ENCODE measurements at regions of chr16 and their contacts with region 1.

Region 1: GRCh38 chr16:67816240-67817031 is 9.7 kb downstream of the TSNAXIP1 start:
- DNase-seq: peak; percentile 93
- H3K4me3 Mint-ChIP-seq: no peak overlapping the region
- H3K27ac Mint-ChIP-seq: no peak overlapping the region
- H3K4me1 Mint-ChIP-seq: peaks cover 4% of the 10 kb centered on the region
- H3K27me3 Mint-ChIP-seq: no peaks in the 10 kb centered on the region

Region 2: GRCh38 chr16:66091471-66091891 is 1725.0 kb before region 1 on chr16:
- CTCF ChIA-PET with region 1: no interaction called
- intact Hi-C with region 1: no loop called
- DNase-seq: no peak
- H3K4me3 Mint-ChIP-seq: no peak overlapping the region
- H3K27ac Mint-ChIP-seq: no peak overlapping the region
- H3K4me1 Mint-ChIP-seq: no peaks in the 10 kb centered on the region
- H3K27me3 Mint-ChIP-seq: peaks cover 2% of the 10 kb centered on the region

Region 3: GRCh38 chr16:66508261-66508913 is 1308.0 kb before region 1 on chr16:
- CTCF ChIA-PET with region 1: no interaction called
- intact Hi-C with region 1: no loop called
- DNase-seq: no peak
- H3K4me3 Mint-ChIP-seq: no peak overlapping the region
- H3K27ac Mint-ChIP-seq: no peak overlapping the region
- H3K4me1 Mint-ChIP-seq: no peaks in the 10 kb centered on the region
- H3K27me3 Mint-ChIP-seq: no peaks in the 10 kb centered on the region

Region 4: DNA sequence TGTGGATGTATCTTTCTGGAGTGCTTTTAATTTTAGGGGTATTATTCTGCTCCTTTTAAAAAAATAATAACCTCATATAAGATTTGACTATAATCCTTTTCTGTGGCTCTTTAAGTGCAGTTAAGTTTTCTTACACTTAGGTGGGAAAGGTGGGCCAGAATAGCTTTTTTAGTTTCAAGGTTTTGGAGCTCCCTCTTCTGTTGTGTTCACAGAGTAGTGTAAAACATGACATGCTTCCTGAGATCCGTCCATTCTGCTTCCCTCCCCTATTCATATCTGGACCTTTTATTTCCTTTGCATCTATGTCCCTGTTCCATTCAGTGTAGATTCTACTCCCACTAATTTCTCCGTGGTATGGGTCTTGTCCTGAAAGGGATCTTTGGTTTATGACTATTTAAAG is 477.0 kb before region 1 on chr16:
- CTCF ChIA-PET with region 1: no interaction called
- intact Hi-C with region 1: no loop called
- DNase-seq: no peak
- H3K4me3 Mint-ChIP-seq: no peak overlapping the region
- H3K27ac Mint-ChIP-seq: no peak overlapping the region
- H3K4me1 Mint-ChIP-seq: no peaks in the 10 kb centered on the region
- H3K27me3 Mint-ChIP-seq: peaks cover 11% of the 10 kb centered on the region

Region 5: DNA sequence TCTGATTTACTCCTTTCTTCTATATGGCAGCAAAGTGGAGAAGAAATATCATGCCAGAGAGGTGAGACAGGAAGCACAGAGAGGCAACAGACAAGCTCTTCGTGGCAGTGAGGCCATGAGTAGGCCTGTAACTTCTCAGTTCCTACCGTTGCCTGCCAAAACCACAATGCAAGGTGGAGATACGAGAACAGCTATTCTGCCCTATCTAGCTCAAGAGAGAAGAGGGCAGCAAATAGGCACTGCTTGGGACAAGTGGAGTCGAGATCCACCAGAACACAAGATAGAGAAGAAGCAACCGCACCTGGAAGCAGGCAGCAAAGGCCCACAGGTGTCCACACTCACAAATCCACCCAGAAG is 34.9 kb before region 1 on chr16:
- CTCF ChIA-PET with region 1: interaction called, 23 read pairs
- intact Hi-C with region 1: no loop called
- DNase-seq: peak; percentile 54
- H3K4me3 Mint-ChIP-seq: no peak overlapping the region
- H3K27ac Mint-ChIP-seq: peak overlapping the region; percentile 67
- H3K4me1 Mint-ChIP-seq: peaks cover 32% of the 10 kb centered on the region
- H3K27me3 Mint-ChIP-seq: no peaks in the 10 kb centered on the region

Region 6: GRCh38 chr16:67833418-67834241 is 17.2 kb after region 1 on chr16:
- CTCF ChIA-PET with region 1: interaction called, 58 read pairs
- intact Hi-C with region 1: loop called (anchors 1 kb)
- DNase-seq: peak; percentile 98
- H3K4me3 Mint-ChIP-seq: peak overlapping the region; percentile 86
- H3K27ac Mint-ChIP-seq: no peak overlapping the region
- H3K4me1 Mint-ChIP-seq: peaks cover 6% of the 10 kb centered on the region
- H3K27me3 Mint-ChIP-seq: no peaks in the 10 kb centered on the region

Region 7: DNA sequence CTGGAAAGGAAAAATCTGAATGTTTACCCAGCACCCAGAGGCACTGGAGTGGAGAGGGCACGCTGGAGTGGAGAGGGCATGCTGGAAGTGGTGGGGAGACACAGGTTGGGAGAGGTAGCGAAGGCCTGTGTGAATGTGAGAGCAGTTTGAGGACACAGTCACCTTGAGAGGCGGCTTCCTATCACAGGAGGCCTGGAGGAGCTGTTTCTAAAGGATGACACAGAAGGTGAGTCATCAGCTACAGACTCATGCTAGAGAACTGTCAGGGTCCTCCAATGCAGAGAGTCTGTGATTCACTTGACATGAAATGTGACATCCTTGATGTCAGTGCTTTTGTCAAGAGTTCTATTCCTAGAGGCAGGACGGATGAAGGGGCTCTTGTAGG is 101.4 kb after region 1 on chr16:
- CTCF ChIA-PET with region 1: interaction called, 7 read pairs
- intact Hi-C with region 1: loop called (anchors 1 kb)
- DNase-seq: peak; percentile 81
- H3K4me3 Mint-ChIP-seq: no peak overlapping the region
- H3K27ac Mint-ChIP-seq: peak overlapping the region; percentile 89
- H3K4me1 Mint-ChIP-seq: peaks cover 38% of the 10 kb centered on the region
- H3K27me3 Mint-ChIP-seq: no peaks in the 10 kb centered on the region

Region 8: DNA sequence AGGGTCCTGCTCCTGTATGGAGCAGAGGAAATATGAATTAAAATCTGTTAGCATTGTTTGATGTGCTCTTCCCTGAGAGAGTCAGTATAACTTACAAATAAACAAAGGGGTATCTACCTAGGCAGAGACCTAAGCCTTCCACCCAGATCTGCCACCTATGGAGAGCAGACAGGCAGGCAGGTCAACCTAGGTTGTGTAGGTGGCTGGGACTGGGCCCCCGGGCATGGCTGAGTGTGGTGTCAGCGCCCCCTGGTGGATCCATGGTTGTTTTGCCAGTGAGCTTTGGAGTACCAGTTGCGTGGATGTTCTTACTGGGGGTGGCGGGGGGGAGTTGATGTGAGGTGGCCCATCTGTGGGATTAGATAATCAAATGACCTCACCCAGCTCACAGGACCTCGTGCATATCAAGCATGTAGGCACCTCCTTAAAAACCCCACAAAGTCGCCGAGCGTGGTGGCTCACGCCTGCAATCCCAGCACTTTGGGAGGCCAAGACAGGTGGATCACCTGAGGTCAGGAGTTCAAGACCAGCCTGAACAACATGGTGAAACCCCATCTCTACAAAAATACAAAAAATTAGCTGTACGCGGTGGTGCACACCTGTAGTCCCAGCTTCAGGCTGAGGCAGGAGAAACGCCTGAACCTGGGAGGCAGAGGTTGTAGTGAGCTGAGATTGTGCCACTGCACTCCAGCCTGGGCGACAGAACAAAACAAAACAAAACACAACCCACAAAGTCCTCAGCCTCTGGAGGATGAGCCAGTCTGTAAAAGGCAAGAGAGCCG is 224.3 kb after region 1 on chr16:
- CTCF ChIA-PET with region 1: interaction called, 5 read pairs
- intact Hi-C with region 1: loop called (anchors 1 kb)
- DNase-seq: peak; percentile 95
- H3K4me3 Mint-ChIP-seq: no peak overlapping the region
- H3K27ac Mint-ChIP-seq: no peak overlapping the region
- H3K4me1 Mint-ChIP-seq: peaks cover 7% of the 10 kb centered on the region
- H3K27me3 Mint-ChIP-seq: no peaks in the 10 kb centered on the region